Gastrocnemius medialis (tissue), 4 donors: ENCODE measurements at regions of chr15 and their contacts with region 1.

Region 1: DNA sequence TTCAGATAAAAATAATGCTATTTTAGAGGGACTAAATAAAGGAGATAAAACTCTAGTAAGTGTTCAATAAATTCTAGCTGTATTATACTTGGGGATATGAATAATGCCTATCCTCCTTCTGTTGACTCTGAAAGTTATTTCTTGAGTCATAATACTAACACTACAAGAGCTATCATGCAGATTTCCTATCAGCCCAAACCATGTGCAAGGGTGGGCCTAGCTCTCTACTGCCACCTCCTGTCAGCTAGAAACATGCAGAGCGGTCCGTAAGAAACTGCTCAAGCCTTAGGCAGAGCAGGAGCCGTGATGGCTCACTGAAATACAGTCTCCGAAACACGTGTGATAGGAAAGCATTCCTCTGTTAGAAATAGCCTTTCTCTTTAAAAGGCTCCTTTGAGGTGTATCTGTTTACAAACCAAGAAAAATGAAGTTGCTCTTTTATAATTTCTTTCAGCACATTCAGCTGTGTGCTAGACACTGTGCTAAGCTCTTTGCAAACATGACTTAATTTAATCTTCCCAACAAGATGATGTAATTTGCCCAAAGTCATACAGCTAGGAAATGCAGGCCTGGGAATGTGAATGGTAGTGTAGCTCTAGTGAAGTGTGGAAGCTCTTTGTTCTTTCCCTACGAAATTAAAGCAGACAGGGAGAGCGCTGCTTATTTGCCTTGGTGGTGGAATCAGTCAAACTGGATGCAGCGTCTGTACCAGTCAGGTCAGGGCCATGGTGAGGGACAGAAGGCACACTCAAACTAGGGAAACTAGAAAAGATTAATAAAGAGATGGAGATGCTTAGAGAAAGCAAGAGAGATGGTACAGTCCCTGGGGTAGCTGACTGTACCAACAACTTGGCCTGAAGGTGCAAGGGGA is 43.1 kb downstream of the MTHFS start:
- DNase-seq: peak; percentile 21 to 23
- ATAC-seq: peak; percentile 66 to 87
- H3K4me3 ChIP-seq: no peak overlapping the region
- H3K27ac ChIP-seq: no peak overlapping the region
- H3K4me1 ChIP-seq: no peaks in the 10 kb centered on the region
- H3K27me3 ChIP-seq: no peaks in the 10 kb centered on the region
- CTCF ChIP-seq: peak; percentile 66 to 94 (median 80)
- POLR2A ChIP-seq: no peak

Region 2: GRCh38 chr15:79387581-79387980 is 466.1 kb before region 1 on chr15:
- in situ Hi-C with region 1: loop called in 3 of 4 experiments (anchors 5 kb)
- intact Hi-C with region 1: no loop called
- DNase-seq: no peak
- ATAC-seq: no peak
- H3K4me3 ChIP-seq: no peak overlapping the region
- H3K27ac ChIP-seq: no peak overlapping the region
- H3K4me1 ChIP-seq: no peaks in the 10 kb centered on the region
- H3K27me3 ChIP-seq: no peaks in the 10 kb centered on the region
- CTCF ChIP-seq: no peak
- POLR2A ChIP-seq: no peak

Region 3: DNA sequence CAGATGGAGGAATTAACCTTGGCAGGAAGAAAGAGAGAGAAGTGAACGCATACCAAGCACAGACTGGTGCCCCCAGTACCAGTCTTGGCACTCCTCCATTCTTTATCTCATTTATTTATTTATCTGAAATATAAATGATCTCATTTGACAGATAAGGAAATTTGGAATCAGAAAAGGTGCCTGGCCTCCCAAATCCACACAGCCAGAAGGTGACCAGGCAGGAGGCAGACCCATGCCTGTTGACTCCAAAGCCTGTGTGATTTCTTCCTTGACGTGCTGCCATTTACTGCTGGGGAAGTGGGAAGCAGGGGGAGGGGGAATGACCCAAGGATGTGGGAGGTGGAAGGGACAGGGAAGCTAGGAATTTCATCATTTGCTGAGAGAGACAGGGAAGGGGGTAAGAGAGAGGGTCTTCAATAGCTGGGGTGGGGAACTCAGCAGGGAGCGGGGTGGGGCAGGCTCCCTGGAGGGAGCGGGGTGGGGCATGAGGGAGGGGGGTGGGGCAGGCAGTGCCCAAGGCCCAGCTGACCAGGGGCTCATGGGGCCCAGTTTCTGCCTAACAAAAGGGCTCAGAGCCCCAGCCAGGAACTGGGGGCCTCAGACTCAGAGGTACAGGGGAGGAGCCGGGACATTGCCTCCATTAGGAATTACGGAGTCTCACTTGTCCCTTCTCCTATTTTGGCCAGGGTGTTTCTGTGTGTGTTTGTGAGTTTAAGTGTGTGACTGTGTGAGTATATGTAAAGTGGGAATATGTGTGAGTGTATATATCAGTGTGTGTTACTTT is 358.5 kb before region 1 on chr15:
- in situ Hi-C with region 1: no loop called
- intact Hi-C with region 1: no loop called
- DNase-seq: no peak
- ATAC-seq: no peak
- H3K4me3 ChIP-seq: no peak overlapping the region
- H3K27ac ChIP-seq: no peak overlapping the region
- H3K4me1 ChIP-seq: no peaks in the 10 kb centered on the region
- H3K27me3 ChIP-seq: no peaks in the 10 kb centered on the region
- CTCF ChIP-seq: no peak
- POLR2A ChIP-seq: no peak

Region 4: GRCh38 chr15:79769069-79769481 is 84.6 kb before region 1 on chr15:
- in situ Hi-C with region 1: no loop called
- intact Hi-C with region 1: loop called (anchors 1 kb)
- DNase-seq: no peak
- ATAC-seq: peak; percentile 30 to 42
- H3K4me3 ChIP-seq: no peak overlapping the region
- H3K27ac ChIP-seq: no peak overlapping the region
- H3K4me1 ChIP-seq: no peaks in the 10 kb centered on the region
- H3K27me3 ChIP-seq: peaks cover 0 to 2% (median 0%) of the 10 kb centered on the region in 3 donors
- CTCF ChIP-seq: peak in 2 of 5 experiments; percentile 17 to 26
- POLR2A ChIP-seq: no peak